Activated CD4-positive, alpha-beta T cell treated with anti-CD3 and anti-CD28 coated beads for 36 hours (primary cell): ENCODE measurements at regions of chr4 and their contacts with region 1.

Region 1: DNA sequence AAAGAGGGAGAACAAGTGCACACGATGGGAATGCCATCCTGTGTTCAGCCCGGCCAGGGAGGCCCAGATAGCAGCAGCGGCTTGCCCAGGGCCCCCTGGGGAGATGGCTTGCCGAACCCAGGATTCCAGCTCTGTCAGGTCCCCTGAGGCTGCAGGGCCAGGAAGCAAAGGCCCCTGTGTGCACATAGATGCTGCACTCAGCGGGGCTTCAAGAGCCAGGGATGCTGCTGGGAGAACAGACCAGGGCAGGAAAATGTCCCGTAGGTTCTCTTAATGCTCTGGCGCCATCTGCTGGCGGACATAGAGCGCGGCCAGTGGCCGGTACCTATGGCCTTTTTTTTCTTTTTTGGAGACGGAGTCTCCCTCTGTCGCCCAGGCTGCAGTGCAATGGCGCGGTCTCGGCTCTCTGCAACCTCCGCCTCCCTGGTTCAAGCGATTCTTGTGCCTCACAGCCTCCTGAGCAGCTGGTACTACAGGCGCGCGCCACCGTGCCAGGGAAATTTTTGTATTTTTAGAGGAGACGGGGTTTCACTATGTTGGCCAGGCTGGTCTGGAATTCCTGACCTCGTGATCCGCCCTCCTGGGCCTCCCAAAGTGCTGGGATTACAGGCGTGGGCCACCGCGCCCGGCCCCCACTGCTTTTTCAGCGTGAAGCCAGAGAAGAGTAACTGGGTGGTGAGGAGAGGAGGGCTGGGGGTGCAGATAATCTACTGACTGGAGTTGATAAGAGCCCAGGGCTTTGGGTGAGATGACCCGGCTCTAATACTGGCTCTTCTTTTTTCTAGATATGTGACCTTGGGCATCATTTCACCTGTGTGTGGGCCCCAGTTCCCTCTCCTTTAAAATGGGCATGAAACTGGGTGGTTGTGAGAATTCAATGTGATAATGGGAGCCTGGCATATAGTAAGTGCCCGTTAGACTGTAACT is 22.5 kb downstream of the MED28 start:
- DNase-seq: peak; percentile 87
- ATAC-seq: peak; percentile 95
- H3K4me3 Mint-ChIP-seq: no peak overlapping the region
- H3K27ac Mint-ChIP-seq: no peak overlapping the region
- H3K4me1 Mint-ChIP-seq: no peaks in the 10 kb centered on the region
- H3K27me3 Mint-ChIP-seq: no peaks in the 10 kb centered on the region

Region 2: GRCh38 chr4:17550549-17550948 is 86.4 kb before region 1 on chr4:
- CTCF ChIA-PET with region 1: interaction called, 40 read pairs
- POLR2A ChIA-PET with region 1: no interaction called
- intact Hi-C with region 1: loop called (anchors 1 kb)
- DNase-seq: no peak
- ATAC-seq: no peak
- H3K4me3 Mint-ChIP-seq: no peak overlapping the region
- H3K27ac Mint-ChIP-seq: no peak overlapping the region
- H3K4me1 Mint-ChIP-seq: no peaks in the 10 kb centered on the region
- H3K27me3 Mint-ChIP-seq: peaks cover 7% of the 10 kb centered on the region